Posterior vena cava (tissue), 2 donors: ENCODE measurements at regions of chr7 and their contacts with region 1.

Region 1: GRCh38 chr7:15753887-15754579 is 67.5 kb upstream of the MEOX2 start:
- DNase-seq: no peak

Region 2: DNA sequence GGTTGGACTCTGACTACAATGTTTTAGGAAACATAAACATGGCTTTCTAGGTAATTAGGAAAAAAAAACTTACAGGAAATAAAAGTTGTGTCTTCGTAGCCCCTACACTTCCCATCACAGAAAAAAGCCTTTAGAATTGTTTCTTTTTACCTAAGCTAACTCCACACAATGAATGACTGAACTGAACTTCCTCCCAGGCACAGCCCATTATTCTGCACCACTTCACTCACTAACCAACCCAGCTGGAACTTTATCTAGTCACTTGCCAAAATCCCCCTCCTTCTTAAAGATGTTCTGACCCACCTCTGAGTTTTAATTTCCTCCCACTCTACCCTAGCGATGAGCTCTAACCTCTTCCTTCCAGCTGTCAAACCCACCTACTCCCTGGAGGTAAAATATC is 24.2 kb after region 1 on chr7:
- intact Hi-C with region 1: loop called in 1 of 2 experiments (anchors 1 kb)
- DNase-seq: no peak